Esophagus squamous epithelium (tissue), 5 donors: ENCODE measurements at regions of chr9 and their contacts with region 1.

Region 1: GRCh38 chr9:127396808-127397497 is at the start of gene SLC2A8:
- DNase-seq: peak; percentile 84
- H3K4me3 ChIP-seq: peak within 1 kb of the TSS; percentile 80 to 98 (median 84)
- H3K27ac ChIP-seq: peak within 1 kb of the TSS; percentile 86 to 96 (median 90)
- H3K4me1 ChIP-seq: peaks cover 14 to 29% (median 18%) of the 10 kb centered on the region in 3 donors
- H3K27me3 ChIP-seq: no peaks in the 10 kb centered on the region
- CTCF ChIP-seq: peak in 5 of 6 experiments; percentile 26 to 48 (median 32)
- POLR2A ChIP-seq: peak in 3 of 4 donors; percentile 10 to 82 (median 80)
- total RNA-seq, gene SLC2A8: 6.2 to 28.3 (median 16.7) TPM

Region 2: DNA sequence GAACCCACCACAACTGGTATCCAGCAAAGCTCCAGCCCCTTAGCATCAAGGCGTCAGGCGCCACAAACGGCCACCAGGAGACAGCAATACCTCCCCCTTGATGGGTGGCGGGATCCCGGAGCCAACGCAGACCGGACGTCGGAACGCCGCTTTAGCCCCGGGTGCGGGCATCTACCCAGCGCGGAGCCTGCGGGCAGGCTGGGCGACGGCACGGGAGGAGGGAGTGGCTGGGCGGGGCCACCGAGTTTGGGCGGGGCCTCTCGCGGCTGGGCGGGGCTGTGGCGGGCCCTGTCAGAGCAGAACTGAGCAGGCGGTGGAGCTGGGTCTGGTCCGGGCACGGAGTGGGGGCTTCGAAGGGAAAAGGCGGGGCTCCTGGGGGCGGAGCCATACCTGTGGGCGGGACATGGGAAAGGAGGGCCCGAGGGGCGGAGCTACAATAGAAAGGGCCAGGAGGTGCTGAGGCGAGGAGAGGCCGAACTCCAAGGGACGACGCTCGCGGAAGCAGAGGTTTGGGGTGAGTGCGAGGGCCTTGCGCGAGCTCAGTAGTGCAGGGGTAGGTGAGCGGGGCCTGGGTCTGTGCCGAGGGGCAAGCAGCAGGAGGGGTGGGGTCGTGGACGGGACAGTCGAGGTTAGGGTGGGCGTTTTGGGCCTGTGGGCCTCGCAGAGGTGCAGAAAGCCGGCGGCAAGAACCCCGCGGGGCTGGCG is 172.6 kb before region 1 on chr9:
- intact Hi-C with region 1: loop called (anchors 10 kb)
- DNase-seq: peak; percentile 50
- H3K4me3 ChIP-seq: peak overlapping the region; percentile 56 to 91 (median 81)
- H3K27ac ChIP-seq: peak overlapping the region; percentile 78 to 90 (median 86)
- H3K4me1 ChIP-seq: peaks cover 13 to 27% (median 13%) of the 10 kb centered on the region in 3 donors
- H3K27me3 ChIP-seq: no peaks in the 10 kb centered on the region
- CTCF ChIP-seq: peak in 2 of 6 experiments; percentile 3 to 9
- POLR2A ChIP-seq: peak in 2 of 4 donors; percentile 17 to 52

Region 3: GRCh38 chr9:127347831-127348779 is 48.8 kb before region 1 on chr9:
- intact Hi-C with region 1: no loop called
- DNase-seq: no peak
- H3K4me3 ChIP-seq: no peak overlapping the region
- H3K27ac ChIP-seq: no peak overlapping the region
- H3K4me1 ChIP-seq: peaks cover 0 to 19% (median 4%) of the 10 kb centered on the region in 3 donors
- H3K27me3 ChIP-seq: no peaks in the 10 kb centered on the region
- CTCF ChIP-seq: peak in 4 of 6 experiments; percentile 14 to 51 (median 14)
- POLR2A ChIP-seq: no peak